PC-9 (cell line): ENCODE measurements at regions of chr3 and their contacts with region 1.

Region 1: GRCh38 chr3:159763602-159764489 is 224.8 kb upstream of the IL12A start:
- DNase-seq: peak; percentile 75 to 98
- H3K4me3 ChIP-seq: peak overlapping the region; percentile 61
- H3K27ac ChIP-seq: peak overlapping the region; percentile 84
- H3K4me1 ChIP-seq: peaks cover 42% of the 10 kb centered on the region
- H3K27me3 ChIP-seq: no peaks in the 10 kb centered on the region
- CTCF ChIP-seq: no peak; the same call in 1 of the 2 replicates

Region 2: DNA sequence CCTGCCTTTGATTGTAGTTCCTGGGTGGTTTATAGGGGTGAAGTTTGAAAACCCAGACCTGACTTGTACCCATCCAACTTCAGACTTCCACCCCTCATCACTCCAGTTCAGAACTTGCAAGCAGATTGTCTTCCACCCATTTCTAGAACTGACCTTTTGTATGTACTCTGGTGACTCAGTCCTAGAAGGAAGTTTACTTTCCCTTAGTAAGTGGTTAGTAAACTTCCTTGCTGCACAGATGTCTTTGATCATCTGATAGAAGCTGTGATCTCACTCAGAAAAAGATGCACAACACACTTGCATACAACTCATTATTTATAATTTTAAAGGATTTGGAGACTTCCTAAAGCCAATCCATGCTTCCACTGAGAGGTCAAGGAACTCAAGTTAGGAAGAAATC is 594.0 kb before region 1 on chr3:
- CTCF ChIA-PET with region 1: no interaction called
- POLR2A ChIA-PET with region 1: no interaction called
- intact Hi-C with region 1: loop called (anchors 10 kb)
- DNase-seq: peak in 1 of 2 experiments; percentile 79
- H3K4me3 ChIP-seq: no peak overlapping the region
- H3K27ac ChIP-seq: peak overlapping the region; percentile 69
- H3K4me1 ChIP-seq: peaks cover 28% of the 10 kb centered on the region
- H3K27me3 ChIP-seq: no peaks in the 10 kb centered on the region
- CTCF ChIP-seq: no peak

Region 3: DNA sequence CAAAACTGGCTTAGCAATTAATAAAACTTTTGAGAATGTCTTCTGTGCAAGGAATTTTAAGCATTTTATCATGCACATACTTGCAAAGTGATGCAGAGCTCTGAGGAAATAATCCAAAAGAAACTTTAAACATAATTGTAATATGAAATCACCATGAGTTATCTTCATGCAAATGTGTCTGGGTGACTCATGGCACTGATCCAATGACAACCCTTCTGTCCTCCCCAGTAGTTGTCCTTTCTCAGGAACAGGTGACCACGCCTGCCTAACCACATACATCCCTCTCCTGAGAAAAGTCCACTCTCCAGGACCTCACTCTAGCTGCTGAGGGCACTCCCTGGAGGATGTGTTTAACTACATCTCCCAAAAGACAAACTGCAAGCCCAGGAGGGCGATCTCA is 305.8 kb before region 1 on chr3:
- CTCF ChIA-PET with region 1: no interaction called
- POLR2A ChIA-PET with region 1: interaction called, 5 read pairs
- intact Hi-C with region 1: loop called (anchors 1 kb)
- DNase-seq: peak; percentile 92 to 96
- H3K4me3 ChIP-seq: no peak overlapping the region
- H3K27ac ChIP-seq: peak overlapping the region; percentile 63
- H3K4me1 ChIP-seq: peaks cover 25% of the 10 kb centered on the region
- H3K27me3 ChIP-seq: no peaks in the 10 kb centered on the region
- CTCF ChIP-seq: no peak

Region 4: DNA sequence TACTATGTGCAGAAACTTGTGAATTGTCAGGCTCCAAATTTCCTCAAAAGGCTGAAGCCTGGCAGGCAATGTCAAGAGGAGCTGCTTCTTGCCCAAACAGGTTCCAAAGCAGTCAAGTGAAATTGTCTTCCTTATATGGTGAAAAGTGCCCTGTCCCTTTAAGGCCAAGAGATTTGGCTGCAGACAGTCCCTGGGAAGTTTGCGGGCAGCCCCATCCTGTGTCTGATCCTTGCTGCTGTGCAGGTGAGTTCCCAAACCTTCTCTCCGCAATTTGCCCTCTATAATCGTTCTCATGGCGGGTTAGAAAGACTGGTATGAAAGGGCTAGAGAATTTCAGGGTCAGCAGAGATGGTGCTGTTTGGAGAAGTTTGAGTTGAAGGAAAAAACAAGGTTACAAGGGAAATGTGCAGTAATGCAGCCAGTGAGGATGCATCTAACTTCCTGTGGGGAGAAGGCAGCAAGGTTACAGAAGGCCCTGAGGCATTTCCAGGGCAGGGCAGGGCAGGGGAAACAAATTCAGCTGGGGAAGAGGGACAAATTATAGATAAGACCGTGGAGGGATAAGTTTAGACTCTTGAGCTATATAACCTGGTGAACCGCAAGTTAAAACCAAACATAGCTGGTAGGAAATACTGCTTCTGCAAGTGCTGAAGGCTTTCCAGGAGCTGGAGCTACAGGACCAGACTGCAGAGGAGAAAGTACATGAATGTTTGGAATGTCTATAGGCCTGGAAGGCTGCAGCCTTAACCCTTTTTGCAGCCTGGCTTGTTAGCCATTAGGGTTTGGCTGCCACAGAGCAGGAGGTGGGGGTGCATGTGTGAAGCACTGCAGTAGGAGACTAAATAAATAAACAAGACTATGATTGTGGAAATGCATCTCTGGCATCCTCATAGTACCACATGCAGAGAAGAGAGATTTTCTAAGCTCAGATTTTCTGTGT is 31.4 kb before region 1 on chr3:
- CTCF ChIA-PET with region 1: interaction called, 8 read pairs
- POLR2A ChIA-PET with region 1: interaction called, 8 read pairs
- intact Hi-C with region 1: loop called (anchors 1 kb)
- DNase-seq: peak; percentile 69 to 73
- H3K4me3 ChIP-seq: peak overlapping the region; percentile 38; the same call in 1 of the 2 replicates
- H3K27ac ChIP-seq: no peak overlapping the region
- H3K4me1 ChIP-seq: peaks cover 23% of the 10 kb centered on the region
- H3K27me3 ChIP-seq: no peaks in the 10 kb centered on the region
- CTCF ChIP-seq: no peak

Region 5: DNA sequence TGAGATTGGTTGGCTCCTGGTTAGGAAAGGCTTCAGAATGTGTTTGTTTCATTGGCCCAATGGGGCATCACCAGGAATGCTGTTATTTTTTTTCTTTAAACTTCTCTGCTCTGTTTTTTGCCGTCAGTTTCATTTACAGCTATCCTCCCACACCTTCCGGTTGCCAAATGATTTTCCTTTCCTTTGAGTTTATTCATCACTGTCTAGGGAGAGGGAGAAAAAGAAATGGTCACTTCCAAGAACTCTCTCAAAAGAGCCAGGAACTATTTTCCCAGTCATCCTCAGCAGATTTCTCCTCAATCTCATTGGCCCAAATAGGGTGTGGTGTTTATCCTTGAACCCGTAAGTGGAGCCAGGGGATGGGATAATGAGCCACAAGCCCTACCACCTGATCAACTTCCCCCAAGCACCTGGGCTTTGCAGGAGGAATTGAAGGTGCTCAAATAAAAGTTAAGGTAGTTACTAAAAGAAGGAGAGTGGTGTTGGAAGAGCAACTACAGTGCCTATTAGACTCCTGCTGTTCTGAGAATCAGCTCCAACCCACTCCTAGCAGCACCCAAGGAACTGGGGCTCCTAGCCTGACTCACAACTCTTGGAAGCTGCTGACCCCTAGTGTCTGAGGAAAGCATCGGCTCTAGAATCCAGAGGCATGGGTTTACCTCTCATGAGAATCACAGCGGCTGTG is 41.0 kb after region 1 on chr3:
- CTCF ChIA-PET with region 1: interaction called, 10 read pairs
- POLR2A ChIA-PET with region 1: interaction called, 6 read pairs
- intact Hi-C with region 1: loop called (anchors 1 kb)
- DNase-seq: peak; percentile 73
- H3K4me3 ChIP-seq: no peak overlapping the region
- H3K27ac ChIP-seq: no peak overlapping the region
- H3K4me1 ChIP-seq: no peaks in the 10 kb centered on the region
- H3K27me3 ChIP-seq: no peaks in the 10 kb centered on the region
- CTCF ChIP-seq: peak; percentile 93

Region 6: GRCh38 chr3:159929435-159930141 is 165.7 kb after region 1 on chr3:
- CTCF ChIA-PET with region 1: no interaction called
- POLR2A ChIA-PET with region 1: interaction called, 10 read pairs
- intact Hi-C with region 1: loop called (anchors 1 kb)
- DNase-seq: peak; percentile 51 to 93
- H3K4me3 ChIP-seq: peak overlapping the region; percentile 27; the same call in 1 of the 2 replicates
- H3K27ac ChIP-seq: peak overlapping the region; percentile 94
- H3K4me1 ChIP-seq: peaks cover 46% of the 10 kb centered on the region
- H3K27me3 ChIP-seq: no peaks in the 10 kb centered on the region
- CTCF ChIP-seq: peak; percentile 62